Activated CD4-positive, alpha-beta T cell treated with anti-CD3 and anti-CD28 coated beads for 36 hours (primary cell): ENCODE measurements at regions of chr12 and their contacts with region 1.

Region 1: GRCh38 chr12:122526683-122527477 is at the starts of genes KNTC1 and RSRC2:
- DNase-seq: peak; percentile 99
- ATAC-seq: peak; percentile 93
- H3K4me3 Mint-ChIP-seq: no peak within 1 kb of the TSS
- H3K27ac Mint-ChIP-seq: no peak within 1 kb of the TSS
- H3K4me1 Mint-ChIP-seq: peaks cover 37% of the 10 kb centered on the region
- H3K27me3 Mint-ChIP-seq: no peaks in the 10 kb centered on the region
- total RNA-seq, gene KNTC1: 136 to 175 TPM
- total RNA-seq, gene RSRC2: 92.7 to 105 TPM

Region 2: GRCh38 chr12:121351820-121352681 is 1174.8 kb before region 1 on chr12 and contains the start of gene ANAPC5:
- CTCF ChIA-PET with region 1: no interaction called
- POLR2A ChIA-PET with region 1: no interaction called
- intact Hi-C with region 1: loop called in 1 of 2 experiments (anchors 2 kb)
- DNase-seq: peak; percentile 94
- ATAC-seq: peak; percentile 99
- H3K4me3 Mint-ChIP-seq: peak within 1 kb of the TSS; percentile 92
- H3K27ac Mint-ChIP-seq: peak within 1 kb of the TSS; percentile 97
- H3K4me1 Mint-ChIP-seq: peaks cover 24% of the 10 kb centered on the region
- H3K27me3 Mint-ChIP-seq: peaks cover under 1% of the 10 kb centered on the region
- total RNA-seq, gene ANAPC5: 113 to 118 TPM

Region 3: GRCh38 chr12:122190842-122191668 is 335.8 kb before region 1 on chr12:
- CTCF ChIA-PET with region 1: no interaction called
- POLR2A ChIA-PET with region 1: no interaction called
- intact Hi-C with region 1: no loop called
- DNase-seq: peak; percentile 86
- ATAC-seq: peak; percentile 93
- H3K4me3 Mint-ChIP-seq: no peak overlapping the region
- H3K27ac Mint-ChIP-seq: no peak overlapping the region
- H3K4me1 Mint-ChIP-seq: no peaks in the 10 kb centered on the region
- H3K27me3 Mint-ChIP-seq: peaks cover 2% of the 10 kb centered on the region

Region 4: DNA sequence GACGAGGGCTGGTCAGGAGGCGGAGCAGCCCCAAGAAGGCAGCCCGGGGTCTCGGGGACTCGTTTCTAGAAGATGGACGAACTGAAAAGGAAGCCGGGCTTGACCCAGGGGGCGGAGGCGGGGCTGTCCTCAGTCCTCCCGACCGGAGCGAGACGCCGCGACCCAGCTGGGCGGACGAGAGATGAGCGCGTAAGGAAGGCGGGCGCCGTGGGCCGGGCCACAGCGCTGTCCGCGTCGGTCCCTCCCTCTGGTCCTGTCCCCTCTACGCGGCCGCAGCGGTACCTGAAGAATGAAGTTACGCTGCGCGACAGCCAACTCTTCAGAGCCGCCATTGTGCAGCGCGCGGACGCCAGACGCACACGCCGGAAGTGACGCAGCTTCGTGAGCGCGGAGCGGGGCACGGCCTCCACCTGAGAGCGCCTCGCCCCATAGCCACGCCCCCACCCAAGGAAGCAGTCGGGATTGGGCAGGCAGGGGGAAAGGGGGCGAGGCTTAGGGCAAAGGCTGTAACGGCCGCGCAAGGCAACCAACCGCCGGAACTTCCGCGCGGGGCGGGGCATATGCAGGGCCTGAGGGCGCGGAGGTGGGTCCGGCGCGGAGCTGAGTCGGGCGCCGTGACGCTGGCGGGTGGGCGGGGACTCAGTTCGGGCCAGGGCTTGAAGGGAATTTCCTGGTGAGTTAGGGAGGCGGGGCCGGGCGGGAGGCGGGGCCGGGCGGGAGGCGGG is 301.0 kb before region 1 on chr12 and contains the start of gene DIABLO:
- CTCF ChIA-PET with region 1: no interaction called
- POLR2A ChIA-PET with region 1: interaction called, 3 read pairs
- intact Hi-C with region 1: loop called (anchors 1 kb)
- DNase-seq: peak; percentile 100
- ATAC-seq: peak; percentile 98
- H3K4me3 Mint-ChIP-seq: peak within 1 kb of the TSS; percentile 92
- H3K27ac Mint-ChIP-seq: peak within 1 kb of the TSS; percentile 93
- H3K4me1 Mint-ChIP-seq: peaks cover 29% of the 10 kb centered on the region
- H3K27me3 Mint-ChIP-seq: no peaks in the 10 kb centered on the region
- total RNA-seq, gene DIABLO: 46.3 to 47.0 TPM

Region 5: GRCh38 chr12:122413516-122414404 is 113.1 kb before region 1 on chr12:
- CTCF ChIA-PET with region 1: interaction called, 3 read pairs
- POLR2A ChIA-PET with region 1: no interaction called
- intact Hi-C with region 1: loop called in 1 of 2 experiments (anchors 2 kb)
- DNase-seq: no peak
- ATAC-seq: no peak
- H3K4me3 Mint-ChIP-seq: peak overlapping the region; percentile 69
- H3K27ac Mint-ChIP-seq: peak overlapping the region; percentile 99
- H3K4me1 Mint-ChIP-seq: peaks cover 54% of the 10 kb centered on the region
- H3K27me3 Mint-ChIP-seq: no peaks in the 10 kb centered on the region

Region 6: DNA sequence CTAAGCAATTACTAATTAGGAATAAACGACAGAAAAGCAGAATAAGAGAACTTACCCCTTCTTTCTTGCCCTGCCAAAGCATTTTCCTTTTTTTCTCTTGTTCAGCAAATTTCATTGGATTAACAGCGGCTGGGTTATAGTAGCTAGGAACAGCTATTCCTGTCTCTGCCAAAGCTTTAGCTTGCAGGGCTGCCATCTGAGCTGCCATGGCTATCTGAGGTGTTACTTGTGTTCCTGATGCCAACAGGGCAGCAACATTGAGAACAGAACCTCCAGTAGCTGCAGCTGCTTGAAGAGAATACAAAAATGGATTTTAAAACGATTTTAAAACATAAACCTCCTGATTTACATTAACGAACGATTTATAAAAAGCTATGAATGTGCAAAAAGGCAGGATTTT is 18.7 kb before region 1 on chr12:
- CTCF ChIA-PET with region 1: interaction called, 3 read pairs
- POLR2A ChIA-PET with region 1: interaction called, 10 read pairs
- intact Hi-C with region 1: no loop called
- DNase-seq: no peak
- ATAC-seq: no peak
- H3K4me3 Mint-ChIP-seq: no peak overlapping the region
- H3K27ac Mint-ChIP-seq: no peak overlapping the region
- H3K4me1 Mint-ChIP-seq: no peaks in the 10 kb centered on the region
- H3K27me3 Mint-ChIP-seq: no peaks in the 10 kb centered on the region

Region 7: DNA sequence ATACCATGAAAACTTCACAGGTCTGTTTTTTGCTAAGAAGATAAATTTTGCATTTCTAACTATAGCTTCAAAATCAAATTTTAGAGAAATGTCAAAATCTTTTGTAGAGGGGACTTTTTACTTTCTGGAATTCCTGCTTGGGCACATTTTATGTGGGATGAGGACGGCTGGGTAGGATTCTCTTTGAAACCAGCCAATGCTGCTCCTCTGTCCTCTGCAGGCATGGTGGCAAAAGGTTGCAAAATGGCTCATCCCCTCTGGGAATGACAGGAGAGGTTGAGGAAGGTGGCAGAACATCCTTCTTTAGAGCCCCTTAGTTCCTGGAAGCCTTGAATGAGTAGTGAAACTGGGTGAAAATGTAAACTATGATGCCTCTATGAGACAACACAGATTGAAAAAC is 240.8 kb after region 1 on chr12:
- CTCF ChIA-PET with region 1: no interaction called
- POLR2A ChIA-PET with region 1: no interaction called
- intact Hi-C with region 1: loop called in 1 of 2 experiments (anchors 5 kb)
- DNase-seq: no peak
- ATAC-seq: peak; percentile 9
- H3K4me3 Mint-ChIP-seq: no peak overlapping the region
- H3K27ac Mint-ChIP-seq: no peak overlapping the region
- H3K4me1 Mint-ChIP-seq: no peaks in the 10 kb centered on the region
- H3K27me3 Mint-ChIP-seq: no peaks in the 10 kb centered on the region